ENCODE measurements at regions of chr1 and their contacts with region 1.

Region 1: GRCh38 chr1:224542783-224543440 is 73.2 kb upstream of the CNIH3 start:
- DNase-seq: peak; percentile 47
- H3K4me3 Mint-ChIP-seq: no peak overlapping the region
- H3K27ac Mint-ChIP-seq: peak overlapping the region; percentile 23
- H3K4me1 Mint-ChIP-seq: peaks cover 18% of the 10 kb centered on the region
- H3K27me3 Mint-ChIP-seq: no peaks in the 10 kb centered on the region

Region 2: DNA sequence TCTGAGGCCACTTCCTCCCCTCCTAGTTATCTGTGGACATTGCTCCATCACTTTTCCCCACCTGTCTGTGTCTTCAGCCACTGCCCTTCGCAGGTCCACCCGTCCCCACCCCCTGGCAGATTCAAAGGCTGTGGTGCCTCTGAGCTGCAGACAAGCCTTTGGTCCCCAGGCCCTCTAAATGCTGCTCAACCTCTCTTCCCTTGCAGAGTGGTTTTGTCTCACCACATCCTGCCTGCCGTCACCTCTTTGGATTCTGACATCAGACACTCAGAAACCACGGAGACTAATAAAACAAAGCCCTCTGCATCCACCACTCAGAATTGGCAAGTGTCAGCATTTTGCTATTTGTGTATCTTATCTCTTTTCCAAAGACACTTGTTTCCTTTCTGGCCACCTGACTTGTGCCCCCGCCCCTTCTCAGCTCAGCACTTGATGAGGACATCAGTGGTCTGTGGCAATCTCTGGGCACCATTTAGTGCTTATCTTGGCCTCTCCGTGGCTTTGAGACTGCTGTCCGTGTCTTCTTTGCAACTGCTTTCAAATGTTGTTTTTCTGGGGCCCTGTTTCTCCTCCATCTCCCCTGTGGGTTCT is 80.9 kb after region 1 on chr1:
- CTCF ChIA-PET with region 1: interaction called, 3 read pairs
- POLR2A ChIA-PET with region 1: no interaction called
- intact Hi-C with region 1: loop called (anchors 1 kb)
- DNase-seq: peak; percentile 90
- H3K4me3 Mint-ChIP-seq: peak overlapping the region; percentile 45
- H3K27ac Mint-ChIP-seq: peak overlapping the region; percentile 87
- H3K4me1 Mint-ChIP-seq: peaks cover 34% of the 10 kb centered on the region
- H3K27me3 Mint-ChIP-seq: peaks cover 28% of the 10 kb centered on the region

Region 3: GRCh38 chr1:224668984-224669383 is 126.1 kb after region 1 on chr1:
- CTCF ChIA-PET with region 1: no interaction called
- POLR2A ChIA-PET with region 1: no interaction called
- intact Hi-C with region 1: no loop called
- DNase-seq: no peak
- H3K4me3 Mint-ChIP-seq: no peak overlapping the region
- H3K27ac Mint-ChIP-seq: no peak overlapping the region
- H3K4me1 Mint-ChIP-seq: no peaks in the 10 kb centered on the region
- H3K27me3 Mint-ChIP-seq: no peaks in the 10 kb centered on the region